Activated CD8-positive, alpha-beta T cell treated with anti-CD3 and anti-CD28 coated beads for 36 hours (primary cell): ENCODE measurements at regions of chr6 and their contacts with region 1.

Region 1: GRCh38 chr6:111709615-111710398 is 104.1 kb upstream of the TRAF3IP2 start:
- DNase-seq: peak; percentile 67
- ATAC-seq: peak; percentile 79
- H3K4me3 Mint-ChIP-seq: no peak overlapping the region
- H3K27ac Mint-ChIP-seq: peak overlapping the region; percentile 92
- H3K4me1 Mint-ChIP-seq: peaks cover 63% of the 10 kb centered on the region
- H3K27me3 Mint-ChIP-seq: no peaks in the 10 kb centered on the region
- CTCF ChIP-seq: peak; percentile 73

Region 2: GRCh38 chr6:111696814-111697213 is 13.0 kb before region 1 on chr6:
- CTCF ChIA-PET with region 1: interaction called, 15 read pairs
- POLR2A ChIA-PET with region 1: interaction called, 4 read pairs
- intact Hi-C with region 1: no loop called
- DNase-seq: no peak
- ATAC-seq: no peak
- H3K4me3 Mint-ChIP-seq: no peak overlapping the region
- H3K27ac Mint-ChIP-seq: peak overlapping the region; percentile 16
- H3K4me1 Mint-ChIP-seq: peaks cover 49% of the 10 kb centered on the region
- H3K27me3 Mint-ChIP-seq: no peaks in the 10 kb centered on the region
- CTCF ChIP-seq: no peak

Region 3: DNA sequence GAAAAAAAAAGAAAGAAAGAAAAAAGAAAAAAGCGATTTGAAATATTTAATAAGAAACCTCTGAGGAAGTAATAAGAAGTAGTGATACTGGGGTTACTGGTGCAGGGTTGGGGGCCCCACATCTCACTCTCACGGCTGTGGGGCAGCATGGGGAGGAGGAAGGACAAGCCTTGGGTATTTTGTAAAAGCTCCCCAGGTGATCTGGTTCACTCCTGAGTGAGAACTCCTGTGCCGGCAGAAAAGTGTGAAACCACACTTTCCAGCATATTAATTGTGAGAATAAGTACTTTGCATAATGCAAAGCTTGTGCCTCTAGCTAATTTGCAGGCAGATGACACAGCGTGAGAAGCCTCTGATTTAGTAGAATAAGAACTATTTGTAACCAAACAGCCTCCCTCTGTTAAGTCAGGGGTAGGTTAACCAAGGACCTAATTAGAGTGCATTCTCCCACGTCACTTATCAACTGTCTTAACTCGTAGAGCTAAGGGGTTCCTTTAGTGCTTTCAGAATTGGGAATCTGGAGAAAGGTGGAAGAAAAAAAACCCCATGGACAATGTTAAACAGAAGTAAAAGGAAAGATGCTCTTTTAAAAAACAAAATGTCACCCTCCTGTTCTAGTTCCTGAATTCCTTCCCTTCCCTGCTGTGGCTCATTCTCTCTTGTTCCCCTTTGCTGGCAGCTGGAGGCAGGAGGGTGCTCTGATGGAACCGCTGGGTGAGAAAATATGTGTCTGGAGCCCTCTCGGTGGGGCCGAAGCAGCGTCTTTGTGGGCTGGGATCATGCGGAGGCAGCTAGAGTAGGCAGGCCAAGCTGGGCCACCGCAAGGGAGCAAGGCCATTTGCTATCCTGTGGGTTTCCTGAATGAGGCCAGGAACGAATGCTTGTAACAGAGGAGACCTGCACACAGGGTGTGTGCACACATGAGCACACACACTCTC is 54.7 kb after region 1 on chr6:
- CTCF ChIA-PET with region 1: interaction called, 19 read pairs
- POLR2A ChIA-PET with region 1: interaction called, 3 read pairs
- intact Hi-C with region 1: loop called (anchors 5 kb)
- DNase-seq: peak; percentile 81
- ATAC-seq: peak; percentile 56
- H3K4me3 Mint-ChIP-seq: peak overlapping the region; percentile 62
- H3K27ac Mint-ChIP-seq: peak overlapping the region; percentile 99
- H3K4me1 Mint-ChIP-seq: peaks cover 98% of the 10 kb centered on the region
- H3K27me3 Mint-ChIP-seq: no peaks in the 10 kb centered on the region
- CTCF ChIP-seq: no peak

Region 4: DNA sequence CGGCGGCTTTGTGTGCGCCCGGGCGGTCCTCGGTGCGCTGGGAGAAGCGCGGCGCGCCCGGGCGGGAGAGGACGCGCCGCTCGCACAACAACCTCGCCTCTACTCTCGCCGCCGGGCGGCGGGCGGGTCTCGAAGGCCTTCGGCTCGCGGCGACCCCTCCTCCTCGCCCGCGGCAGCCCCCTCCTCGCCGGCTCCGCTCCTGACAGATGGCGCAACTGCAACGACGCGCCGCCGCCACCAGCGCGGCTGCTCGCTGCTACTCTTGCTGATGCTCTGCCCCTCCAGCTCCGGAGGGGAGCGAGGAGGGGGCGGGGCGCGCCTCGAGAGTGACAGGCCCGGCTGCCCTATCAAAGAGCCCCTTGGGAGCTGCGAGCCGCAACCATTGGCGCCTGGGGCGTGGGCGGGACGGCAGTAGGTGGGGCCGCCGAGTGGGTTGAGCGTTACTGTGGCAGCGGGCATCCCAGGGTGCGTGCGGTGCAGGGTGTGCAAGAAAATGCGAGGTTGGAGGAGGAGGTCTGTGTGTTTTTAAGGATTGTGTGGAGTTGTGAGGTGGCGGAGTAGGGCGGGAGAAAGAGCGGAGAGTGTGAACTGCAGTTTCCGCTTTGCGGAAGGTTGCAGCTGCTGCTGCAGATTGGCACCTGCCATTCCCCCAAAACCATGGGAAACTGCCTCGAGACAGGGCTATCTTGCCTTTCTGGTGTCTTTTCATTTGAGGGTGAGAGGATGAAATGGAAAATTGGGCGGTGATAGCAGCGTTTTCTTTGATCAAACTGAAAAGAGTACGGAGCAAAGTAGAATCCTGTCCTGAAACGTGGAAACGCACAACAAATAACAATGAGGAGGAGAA is 163.6 kb after region 1 on chr6 and contains the start of gene FYN:
- CTCF ChIA-PET with region 1: interaction called, 8 read pairs
- POLR2A ChIA-PET with region 1: interaction called, 4 read pairs
- intact Hi-C with region 1: loop called (anchors 5 kb)
- DNase-seq: peak; percentile 100
- ATAC-seq: peak; percentile 86
- H3K4me3 Mint-ChIP-seq: peak within 1 kb of the TSS; percentile 98
- H3K27ac Mint-ChIP-seq: peak within 1 kb of the TSS; percentile 98
- H3K4me1 Mint-ChIP-seq: peaks cover 30% of the 10 kb centered on the region
- H3K27me3 Mint-ChIP-seq: no peaks in the 10 kb centered on the region
- CTCF ChIP-seq: peak; percentile 45
- total RNA-seq, gene FYN: 384 to 386 TPM

Region 5: DNA sequence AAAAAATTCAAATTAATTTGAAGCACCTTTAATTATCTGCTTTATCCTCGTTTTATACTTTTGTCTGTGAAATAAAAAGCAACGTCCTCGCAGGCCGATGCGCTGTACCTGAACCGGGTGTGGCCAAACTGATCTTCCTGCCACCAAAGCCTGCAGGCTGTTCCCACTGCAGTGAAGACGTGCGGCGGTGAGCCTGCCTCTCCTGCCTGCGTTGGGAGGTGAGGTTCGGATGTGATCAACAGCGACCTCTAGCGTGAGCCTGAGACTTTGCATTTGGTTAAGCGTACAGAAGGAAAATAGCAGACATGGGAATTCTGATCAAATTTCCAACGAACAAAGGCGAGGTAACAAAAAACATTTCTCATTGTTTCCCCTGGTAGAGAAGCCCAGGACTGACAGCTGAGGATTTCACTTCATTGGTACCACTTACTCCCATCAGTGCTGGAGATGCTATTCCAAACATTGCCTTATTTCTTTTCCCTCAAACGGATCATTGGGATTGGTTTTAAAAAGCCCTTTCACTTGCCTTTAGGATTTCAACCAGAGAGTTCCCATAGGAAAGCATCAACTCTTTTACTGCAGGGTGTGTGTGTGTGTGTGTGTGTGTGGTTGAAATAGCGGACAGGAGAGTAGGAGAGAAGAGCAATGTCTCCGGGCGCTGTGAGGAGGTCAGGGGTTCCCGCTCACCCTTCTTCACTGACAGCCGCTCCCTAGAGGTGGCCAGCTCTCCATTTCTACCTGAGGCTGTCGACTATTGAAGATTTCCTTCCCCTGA is 287.5 kb after region 1 on chr6:
- CTCF ChIA-PET with region 1: interaction called, 21 read pairs
- POLR2A ChIA-PET with region 1: interaction called, 3 read pairs
- intact Hi-C with region 1: loop called (anchors 2 kb)
- DNase-seq: peak; percentile 84
- ATAC-seq: peak; percentile 65
- H3K4me3 Mint-ChIP-seq: peak overlapping the region; percentile 55
- H3K27ac Mint-ChIP-seq: peak overlapping the region; percentile 79
- H3K4me1 Mint-ChIP-seq: peaks cover 47% of the 10 kb centered on the region
- H3K27me3 Mint-ChIP-seq: no peaks in the 10 kb centered on the region
- CTCF ChIP-seq: peak; percentile 99